CD4-positive, alpha-beta T cell (primary cell): ENCODE measurements at regions of chr9 and their contacts with region 1.

Region 1: GRCh38 chr9:122350638-122351355 is 20.0 kb upstream of the PTGS1 start:
- DNase-seq: peak; percentile 48 to 82 (median 70)
- ATAC-seq: peak; percentile 79
- H3K4me3 ChIP-seq: no peak overlapping the region
- H3K4me3 Mint-ChIP-seq: no peak overlapping the region
- H3K27ac ChIP-seq: no peak overlapping the region
- H3K27ac Mint-ChIP-seq: no peak overlapping the region
- H3K4me1 ChIP-seq: peaks cover 6% of the 10 kb centered on the region
- H3K4me1 Mint-ChIP-seq: peaks cover 12% of the 10 kb centered on the region
- H3K27me3 ChIP-seq: peaks cover 15% of the 10 kb centered on the region in 2 experiments
- H3K27me3 Mint-ChIP-seq: peaks cover 54% of the 10 kb centered on the region
- CTCF ChIP-seq: peak; percentile 92

Region 2: GRCh38 chr9:122125158-122125508 is 225.7 kb before region 1 on chr9:
- CTCF ChIA-PET with region 1: interaction called, 23 read pairs
- POLR2A ChIA-PET with region 1: interaction called, 5 read pairs
- intact Hi-C with region 1: loop called (anchors 1 kb)
- DNase-seq: peak; percentile 55 to 86 (median 74)
- ATAC-seq: peak; percentile 79
- H3K4me3 ChIP-seq: no peak overlapping the region
- H3K4me3 Mint-ChIP-seq: peak overlapping the region; percentile 65
- H3K27ac ChIP-seq: no peak overlapping the region
- H3K27ac Mint-ChIP-seq: no peak overlapping the region
- H3K4me1 ChIP-seq: peaks cover 36% of the 10 kb centered on the region
- H3K4me1 Mint-ChIP-seq: peaks cover 21% of the 10 kb centered on the region
- H3K27me3 ChIP-seq: peaks cover 18 to 27% of the 10 kb centered on the region in 2 experiments
- H3K27me3 Mint-ChIP-seq: peaks cover 52% of the 10 kb centered on the region
- CTCF ChIP-seq: peak; percentile 91

Region 3: GRCh38 chr9:122402403-122402871 is 51.6 kb after region 1 on chr9:
- CTCF ChIA-PET with region 1: no interaction called
- POLR2A ChIA-PET with region 1: no interaction called
- intact Hi-C with region 1: no loop called
- DNase-seq: peak in 1 of 14 experiments; percentile 10
- ATAC-seq: no peak
- H3K4me3 ChIP-seq: no peak overlapping the region
- H3K4me3 Mint-ChIP-seq: no peak overlapping the region
- H3K27ac ChIP-seq: no peak overlapping the region
- H3K27ac Mint-ChIP-seq: no peak overlapping the region
- H3K4me1 ChIP-seq: no peaks in the 10 kb centered on the region
- H3K4me1 Mint-ChIP-seq: no peaks in the 10 kb centered on the region
- H3K27me3 ChIP-seq: no peaks in the 10 kb centered on the region
- H3K27me3 Mint-ChIP-seq: peaks cover 36% of the 10 kb centered on the region
- CTCF ChIP-seq: no peak